ENCODE measurements at regions of chr9 and their contacts with region 1.

Region 1: GRCh38 chr9:19174127-19174912 is 47.0 kb upstream of the PLIN2 start:
- DNase-seq: peak in 9 of 14 experiments; percentile 3 to 78 (median 16)
- ATAC-seq: peak; percentile 58
- H3K4me3 ChIP-seq: no peak overlapping the region
- H3K4me3 Mint-ChIP-seq: no peak overlapping the region
- H3K27ac ChIP-seq: no peak overlapping the region
- H3K27ac Mint-ChIP-seq: peak overlapping the region; percentile 21
- H3K4me1 ChIP-seq: peaks cover 22% of the 10 kb centered on the region
- H3K4me1 Mint-ChIP-seq: peaks cover 31% of the 10 kb centered on the region
- H3K27me3 ChIP-seq: no peaks in the 10 kb centered on the region
- H3K27me3 Mint-ChIP-seq: no peaks in the 10 kb centered on the region
- CTCF ChIP-seq: peak; percentile 89

Region 2: GRCh38 chr9:18255158-18255629 is 919.1 kb before region 1 on chr9:
- CTCF ChIA-PET with region 1: interaction called, 5 read pairs
- POLR2A ChIA-PET with region 1: no interaction called
- intact Hi-C with region 1: loop called in 1 of 2 experiments (anchors 5 kb)
- DNase-seq: peak; percentile 41 to 81 (median 58)
- ATAC-seq: peak; percentile 69
- H3K4me3 ChIP-seq: no peak overlapping the region
- H3K4me3 Mint-ChIP-seq: no peak overlapping the region
- H3K27ac ChIP-seq: no peak overlapping the region
- H3K27ac Mint-ChIP-seq: no peak overlapping the region
- H3K4me1 ChIP-seq: no peaks in the 10 kb centered on the region
- H3K4me1 Mint-ChIP-seq: peaks cover 7% of the 10 kb centered on the region
- H3K27me3 ChIP-seq: peaks cover 0 to 3% of the 10 kb centered on the region in 2 experiments
- H3K27me3 Mint-ChIP-seq: peaks cover 27% of the 10 kb centered on the region
- CTCF ChIP-seq: peak; percentile 99

Region 3: GRCh38 chr9:19085295-19085694 is 89.0 kb before region 1 on chr9:
- CTCF ChIA-PET with region 1: interaction called, 19 read pairs
- POLR2A ChIA-PET with region 1: interaction called, 8 read pairs
- intact Hi-C with region 1: loop called (anchors 1 kb)
- DNase-seq: peak in 4 of 14 experiments; percentile 17 to 69 (median 68)
- ATAC-seq: peak; percentile 88
- H3K4me3 ChIP-seq: no peak overlapping the region
- H3K4me3 Mint-ChIP-seq: no peak overlapping the region
- H3K27ac ChIP-seq: no peak overlapping the region
- H3K27ac Mint-ChIP-seq: no peak overlapping the region
- H3K4me1 ChIP-seq: no peaks in the 10 kb centered on the region
- H3K4me1 Mint-ChIP-seq: peaks cover 6% of the 10 kb centered on the region
- H3K27me3 ChIP-seq: no peaks in the 10 kb centered on the region
- H3K27me3 Mint-ChIP-seq: no peaks in the 10 kb centered on the region
- CTCF ChIP-seq: peak; percentile 53

Region 4: GRCh38 chr9:19127881-19128500 is 46.3 kb before region 1 on chr9:
- CTCF ChIA-PET with region 1: interaction called, 5 read pairs
- POLR2A ChIA-PET with region 1: interaction called, 4 read pairs
- intact Hi-C with region 1: loop called (anchors 5 kb)
- DNase-seq: peak; percentile 2 to 60 (median 32)
- ATAC-seq: peak; percentile 25
- H3K4me3 ChIP-seq: peak overlapping the region; percentile 90
- H3K4me3 Mint-ChIP-seq: peak overlapping the region; percentile 94
- H3K27ac ChIP-seq: peak overlapping the region; percentile 90 to 92
- H3K27ac Mint-ChIP-seq: peak overlapping the region; percentile 95
- H3K4me1 ChIP-seq: peaks cover 59% of the 10 kb centered on the region
- H3K4me1 Mint-ChIP-seq: peaks cover 64% of the 10 kb centered on the region
- H3K27me3 ChIP-seq: no peaks in the 10 kb centered on the region
- H3K27me3 Mint-ChIP-seq: no peaks in the 10 kb centered on the region
- CTCF ChIP-seq: no peak

Region 5: DNA sequence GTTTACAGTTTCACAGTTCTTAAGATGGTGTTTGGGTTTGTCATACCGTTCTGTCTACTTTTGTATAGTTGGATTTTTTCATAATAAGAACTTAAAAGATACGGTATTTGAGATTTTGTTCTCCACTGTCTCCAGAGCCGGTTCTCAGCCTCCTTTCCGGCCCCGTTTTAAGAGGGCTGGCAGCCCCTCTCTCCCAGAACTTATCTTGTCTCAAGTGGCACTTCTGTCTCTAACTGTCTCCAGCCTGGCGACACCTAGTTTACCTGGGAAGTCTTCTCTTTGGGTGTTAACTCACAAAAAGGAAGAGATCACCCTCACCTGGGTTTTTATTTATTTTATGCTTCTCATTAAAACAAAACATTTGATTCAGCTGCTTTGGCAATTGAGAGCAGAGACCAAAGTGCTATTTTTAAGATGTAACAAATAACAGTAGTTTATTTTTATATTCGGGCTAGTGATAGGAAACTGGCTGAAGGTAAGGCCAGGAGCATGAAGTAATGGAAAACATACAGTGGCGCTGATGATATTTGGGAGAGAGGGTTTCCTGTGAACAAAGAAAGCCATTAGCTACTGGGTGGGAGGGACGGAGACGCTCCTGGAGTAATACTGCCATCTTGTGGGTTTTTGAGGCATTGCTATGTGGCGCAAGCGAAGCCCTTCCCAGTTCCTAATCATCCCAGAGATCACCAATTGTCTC is 282.8 kb after region 1 on chr9:
- CTCF ChIA-PET with region 1: interaction called, 6 read pairs
- POLR2A ChIA-PET with region 1: no interaction called
- intact Hi-C with region 1: loop called (anchors 1 to 10 kb)
- DNase-seq: peak; percentile 26 to 83 (median 46)
- ATAC-seq: peak; percentile 98
- H3K4me3 ChIP-seq: peak overlapping the region; percentile 10
- H3K4me3 Mint-ChIP-seq: peak overlapping the region; percentile 0
- H3K27ac ChIP-seq: no peak overlapping the region
- H3K27ac Mint-ChIP-seq: no peak overlapping the region
- H3K4me1 ChIP-seq: peaks cover 8% of the 10 kb centered on the region
- H3K4me1 Mint-ChIP-seq: peaks cover 7% of the 10 kb centered on the region
- H3K27me3 ChIP-seq: no peaks in the 10 kb centered on the region
- H3K27me3 Mint-ChIP-seq: no peaks in the 10 kb centered on the region
- CTCF ChIP-seq: peak; percentile 97